ENCODE measurements at regions of chr5 and their contacts with region 1.

Region 1: GRCh38 chr5:96904054-96904931 is 28.0 kb downstream of the ERAP2 start:
- DNase-seq: no peak
- ATAC-seq: no peak
- H3K4me3 Mint-ChIP-seq: no peak overlapping the region
- H3K27ac Mint-ChIP-seq: peak overlapping the region; percentile 37
- H3K4me1 Mint-ChIP-seq: peaks cover 15% of the 10 kb centered on the region
- H3K27me3 Mint-ChIP-seq: no peaks in the 10 kb centered on the region
- CTCF ChIP-seq: no peak

Region 2: DNA sequence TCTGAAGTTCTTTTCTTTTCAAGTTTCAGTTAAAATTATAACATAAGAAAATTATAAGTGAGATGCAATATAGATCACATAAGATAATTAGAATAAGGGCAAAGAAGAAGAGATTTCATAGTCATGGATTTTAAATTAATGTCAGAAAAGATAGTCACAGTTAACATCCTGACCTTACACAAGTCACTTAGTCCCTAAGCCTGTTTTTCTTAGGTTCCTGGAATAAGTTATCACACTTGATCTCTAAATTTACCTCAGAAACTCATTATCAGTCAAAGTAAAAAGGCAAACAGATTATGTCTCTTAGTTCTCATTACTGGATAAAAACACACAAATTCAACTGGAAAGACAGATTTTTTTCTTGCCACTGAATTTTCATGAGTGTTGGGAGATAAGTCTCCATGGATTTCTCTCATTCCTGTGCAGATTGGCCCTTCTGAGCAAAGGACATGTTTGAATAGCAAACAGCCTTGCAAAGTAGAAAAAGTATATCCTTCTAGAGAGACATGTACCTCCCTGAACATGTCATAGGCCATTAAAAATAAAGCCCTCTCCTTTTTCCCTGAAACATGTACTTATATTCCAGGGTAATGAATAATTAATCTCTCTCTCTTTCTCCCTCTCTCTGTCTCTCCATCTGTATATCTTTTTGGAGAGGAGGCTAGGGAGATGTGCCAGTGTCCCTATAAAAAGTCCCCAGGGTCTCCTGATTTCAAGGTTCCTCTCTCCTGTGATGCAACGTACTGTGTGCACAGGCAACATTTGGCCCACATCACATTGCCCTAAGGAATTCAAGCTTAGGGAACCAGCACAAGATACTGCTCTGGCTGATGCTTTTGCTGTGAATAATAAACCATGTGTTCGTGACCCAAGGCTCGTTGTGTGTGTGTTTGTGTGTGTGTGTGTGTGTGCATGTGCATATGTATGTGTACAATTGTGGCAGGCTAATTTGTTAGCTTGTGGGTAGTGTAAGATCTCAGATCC is 1231.5 kb before region 1 on chr5:
- CTCF ChIA-PET with region 1: no interaction called
- POLR2A ChIA-PET with region 1: no interaction called
- intact Hi-C with region 1: no loop called
- DNase-seq: no peak
- ATAC-seq: no peak
- H3K4me3 Mint-ChIP-seq: no peak overlapping the region
- H3K27ac Mint-ChIP-seq: no peak overlapping the region
- H3K4me1 Mint-ChIP-seq: no peaks in the 10 kb centered on the region
- H3K27me3 Mint-ChIP-seq: no peaks in the 10 kb centered on the region
- CTCF ChIP-seq: no peak

Region 3: GRCh38 chr5:96919754-96920197 is 15.5 kb after region 1 on chr5:
- CTCF ChIA-PET with region 1: no interaction called
- POLR2A ChIA-PET with region 1: interaction called, 3 read pairs
- intact Hi-C with region 1: loop called (anchors 2 kb)
- DNase-seq: no peak
- ATAC-seq: peak; percentile 65
- H3K4me3 Mint-ChIP-seq: no peak overlapping the region
- H3K27ac Mint-ChIP-seq: peak overlapping the region; percentile 12
- H3K4me1 Mint-ChIP-seq: peaks cover 42% of the 10 kb centered on the region
- H3K27me3 Mint-ChIP-seq: no peaks in the 10 kb centered on the region
- CTCF ChIP-seq: no peak